HEK293 (cell line): ENCODE measurements at regions of chr17 and their contacts with region 1.

Region 1: DNA sequence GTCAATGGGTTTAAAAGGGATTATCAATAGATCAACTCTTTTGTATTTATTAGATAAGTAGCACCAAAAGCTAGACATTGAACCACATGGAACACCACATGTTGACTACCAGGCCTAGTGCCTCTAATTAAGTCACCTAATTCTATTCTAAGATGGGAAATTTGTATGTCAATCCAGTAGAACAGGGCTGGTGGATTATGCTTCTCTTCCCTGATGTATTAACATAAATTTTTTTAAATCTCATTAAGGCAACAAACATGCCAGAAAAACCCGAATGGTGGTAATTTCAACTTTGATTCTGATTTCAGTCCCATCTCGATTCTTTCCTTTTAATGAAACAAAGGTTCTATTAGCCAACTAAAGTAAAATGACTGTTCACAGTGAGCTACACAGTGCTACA is 92.6 kb downstream of the KANSL1 start:
- H3K4me3 ChIP-seq: no peak overlapping the region
- H3K27ac ChIP-seq: peak overlapping the region; percentile 58
- H3K4me1 ChIP-seq: peaks cover 20% of the 10 kb centered on the region
- CTCF ChIP-seq: no peak

Region 2: DNA sequence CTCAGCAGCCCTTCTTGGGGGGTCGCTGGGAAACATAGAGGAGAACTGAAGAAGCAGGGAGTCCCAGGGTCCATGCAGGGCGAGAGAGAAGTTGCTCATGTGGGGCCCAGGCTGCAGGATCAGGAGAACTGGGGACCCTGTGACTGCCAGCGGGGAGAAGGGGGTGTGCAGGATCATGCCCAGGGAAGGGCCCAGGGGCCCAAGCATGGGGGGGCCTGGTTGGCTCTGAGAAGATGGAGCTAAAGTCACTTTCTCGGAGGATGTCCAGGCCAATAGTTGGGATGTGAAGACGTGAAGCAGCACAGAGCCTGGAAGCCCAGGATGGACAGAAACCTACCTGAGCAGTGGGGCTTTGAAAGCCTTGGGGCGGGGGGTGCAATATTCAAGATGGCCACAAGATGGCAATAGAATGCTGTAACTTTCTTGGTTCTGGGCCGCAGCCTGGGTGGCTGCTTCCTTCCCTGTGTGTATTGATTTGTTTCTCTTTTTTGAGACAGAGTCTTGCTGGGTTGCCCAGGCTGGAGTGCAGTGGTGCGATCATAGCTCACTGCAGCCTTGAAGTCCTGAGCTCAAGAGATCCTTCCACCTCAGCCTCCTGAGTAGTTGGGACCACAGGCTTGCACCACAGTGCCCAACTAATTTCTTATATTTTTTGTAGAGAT is 98.1 kb before region 1 on chr17:
- CTCF ChIA-PET with region 1: no interaction called
- POLR2A ChIA-PET with region 1: no interaction called
- H3K4me3 ChIP-seq: no peak overlapping the region
- H3K27ac ChIP-seq: no peak overlapping the region
- H3K4me1 ChIP-seq: peaks cover 4% of the 10 kb centered on the region; the same call in 1 of the 2 replicates
- CTCF ChIP-seq: peak; percentile 83

Region 3: GRCh38 chr17:46089389-46089965 is 11.1 kb before region 1 on chr17:
- CTCF ChIA-PET with region 1: interaction called, 12 read pairs
- POLR2A ChIA-PET with region 1: no interaction called
- H3K4me3 ChIP-seq: no peak overlapping the region
- H3K27ac ChIP-seq: no peak overlapping the region
- H3K4me1 ChIP-seq: no peaks in the 10 kb centered on the region
- CTCF ChIP-seq: no peak